ENCODE measurements at regions of chr16 and their contacts with region 1.

Region 1: GRCh38 chr16:89489040-89489721 is 1.2 kb downstream of the ANKRD11 start:
- DNase-seq: peak; percentile 89
- H3K4me3 ChIP-seq: peak overlapping the region; percentile 72 to 87
- H3K27ac ChIP-seq: peak overlapping the region; percentile 86 to 96
- H3K4me1 ChIP-seq: peaks cover 47% of the 10 kb centered on the region
- H3K27me3 ChIP-seq: no peaks in the 10 kb centered on the region
- CTCF ChIP-seq: no peak
- POLR2A ChIP-seq: no peak

Region 2: GRCh38 chr16:89135971-89136765 is 353.0 kb before region 1 on chr16:
- intact Hi-C with region 1: no loop called
- DNase-seq: no peak
- H3K4me3 ChIP-seq: no peak overlapping the region
- H3K27ac ChIP-seq: no peak overlapping the region
- H3K4me1 ChIP-seq: no peaks in the 10 kb centered on the region
- H3K27me3 ChIP-seq: no peaks in the 10 kb centered on the region
- CTCF ChIP-seq: no peak
- POLR2A ChIP-seq: no peak

Region 3: DNA sequence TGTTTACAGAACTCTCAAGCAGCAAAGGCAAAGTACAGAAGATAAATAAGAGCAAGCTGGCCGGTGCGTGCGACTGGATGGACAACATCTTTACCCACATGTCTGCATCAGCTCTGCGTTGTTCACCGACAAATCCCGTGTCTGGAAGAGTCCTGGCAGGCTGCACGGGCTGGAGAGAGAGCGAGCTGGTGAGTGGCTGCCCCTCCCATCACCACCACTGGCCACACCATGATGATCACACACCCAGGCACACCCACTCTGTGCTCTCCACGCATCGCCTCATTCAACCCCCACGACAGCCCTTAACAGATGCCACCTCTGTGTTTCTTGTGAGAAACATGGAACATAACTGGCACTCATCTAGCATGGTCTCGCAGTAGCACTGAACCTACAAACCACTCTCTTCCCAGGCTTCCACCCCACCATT is 58.0 kb before region 1 on chr16:
- intact Hi-C with region 1: loop called (anchors 10 kb)
- DNase-seq: peak; percentile 64
- H3K4me3 ChIP-seq: no peak overlapping the region
- H3K27ac ChIP-seq: no peak overlapping the region
- H3K4me1 ChIP-seq: peaks cover 17% of the 10 kb centered on the region
- H3K27me3 ChIP-seq: no peaks in the 10 kb centered on the region
- CTCF ChIP-seq: no peak
- POLR2A ChIP-seq: no peak

Region 4: GRCh38 chr16:89453501-89454321 is 35.5 kb before region 1 on chr16:
- intact Hi-C with region 1: no loop called
- DNase-seq: no peak
- H3K4me3 ChIP-seq: no peak overlapping the region
- H3K27ac ChIP-seq: peak overlapping the region; percentile 1 to 20
- H3K4me1 ChIP-seq: peaks cover 15% of the 10 kb centered on the region
- H3K27me3 ChIP-seq: no peaks in the 10 kb centered on the region
- CTCF ChIP-seq: peak in 1 of 3 experiments; percentile 19
- POLR2A ChIP-seq: no peak